HepG2 (cell line): ENCODE measurements at regions of chr4 and their contacts with region 1.

Region 1: DNA sequence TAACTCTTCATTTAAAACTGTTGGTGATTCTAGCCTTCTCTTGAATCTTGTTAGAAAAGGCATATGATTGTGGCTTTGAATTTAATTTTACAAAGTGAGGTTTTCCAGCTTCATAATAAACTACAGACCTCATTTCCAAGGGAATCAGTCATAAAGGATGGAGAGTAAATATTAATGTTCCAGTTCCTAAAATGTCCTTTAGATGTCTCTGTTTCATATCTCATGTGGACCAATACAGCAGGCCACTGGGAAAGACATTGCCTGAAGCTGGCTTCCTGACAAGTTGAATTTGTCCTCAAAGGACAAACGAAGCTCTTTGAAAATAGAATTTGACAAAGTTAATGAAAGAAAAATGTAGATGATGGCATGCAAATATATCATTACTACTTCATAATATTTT is 125.4 kb downstream of the ZNF330 start:
- DNase-seq: peak; percentile 13
- ATAC-seq: peak; percentile 87
- H3K4me3 ChIP-seq: no peak overlapping the region
- H3K27ac ChIP-seq: no peak overlapping the region
- H3K4me1 ChIP-seq: no peaks in the 10 kb centered on the region
- H3K27me3 ChIP-seq: no peaks in the 10 kb centered on the region
- CTCF ChIP-seq: peak; percentile 56
- EP300 ChIP-seq: no peak
- POLR2A ChIP-seq: no peak
- RAD21 ChIP-seq: peak; percentile 52; the same call in 1 of the 2 replicates

Region 2: DNA sequence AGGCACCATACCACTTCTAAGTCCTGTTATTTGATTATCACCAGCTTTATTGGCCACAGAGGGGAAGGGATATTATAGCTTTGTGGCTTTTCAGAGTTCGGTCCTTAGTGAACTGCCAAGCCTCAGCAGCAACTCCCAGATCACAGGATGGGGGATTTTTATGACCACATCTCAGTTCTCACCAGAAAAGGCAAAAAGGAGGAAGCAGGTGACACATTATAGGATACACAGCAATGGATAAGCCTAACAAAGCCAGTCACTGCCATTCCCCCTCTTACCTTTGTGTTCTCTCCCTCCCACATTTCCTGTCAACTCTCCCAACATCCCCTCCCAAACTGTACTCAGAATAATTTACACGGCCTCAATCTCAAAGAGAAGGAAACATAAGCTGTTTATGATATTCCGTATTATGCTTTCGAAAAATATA is 1537.8 kb before region 1 on chr4:
- CTCF ChIA-PET with region 1: no interaction called
- POLR2A ChIA-PET with region 1: no interaction called
- in situ Hi-C with region 1: no loop called
- intact Hi-C with region 1: no loop called
- DNase-seq: no peak
- ATAC-seq: no peak; the same call in 2 of the 3 replicates
- H3K4me3 ChIP-seq: no peak overlapping the region
- H3K27ac ChIP-seq: no peak overlapping the region
- H3K4me1 ChIP-seq: peaks cover 30% of the 10 kb centered on the region
- H3K27me3 ChIP-seq: peaks cover 3 to 7% of the 10 kb centered on the region in 2 experiments; a peak in 2 of 5 replicates
- CTCF ChIP-seq: no peak
- EP300 ChIP-seq: no peak
- POLR2A ChIP-seq: no peak
- RAD21 ChIP-seq: no peak

Region 3: GRCh38 chr4:141311241-141312204 is 34.6 kb before region 1 on chr4:
- CTCF ChIA-PET with region 1: no interaction called
- POLR2A ChIA-PET with region 1: no interaction called
- in situ Hi-C with region 1: no loop called
- intact Hi-C with region 1: no loop called
- DNase-seq: no peak
- ATAC-seq: no peak
- H3K4me3 ChIP-seq: no peak overlapping the region
- H3K27ac ChIP-seq: no peak overlapping the region
- H3K4me1 ChIP-seq: no peaks in the 10 kb centered on the region
- H3K27me3 ChIP-seq: no peaks in the 10 kb centered on the region
- CTCF ChIP-seq: no peak
- EP300 ChIP-seq: no peak
- POLR2A ChIP-seq: no peak
- RAD21 ChIP-seq: no peak

Region 4: DNA sequence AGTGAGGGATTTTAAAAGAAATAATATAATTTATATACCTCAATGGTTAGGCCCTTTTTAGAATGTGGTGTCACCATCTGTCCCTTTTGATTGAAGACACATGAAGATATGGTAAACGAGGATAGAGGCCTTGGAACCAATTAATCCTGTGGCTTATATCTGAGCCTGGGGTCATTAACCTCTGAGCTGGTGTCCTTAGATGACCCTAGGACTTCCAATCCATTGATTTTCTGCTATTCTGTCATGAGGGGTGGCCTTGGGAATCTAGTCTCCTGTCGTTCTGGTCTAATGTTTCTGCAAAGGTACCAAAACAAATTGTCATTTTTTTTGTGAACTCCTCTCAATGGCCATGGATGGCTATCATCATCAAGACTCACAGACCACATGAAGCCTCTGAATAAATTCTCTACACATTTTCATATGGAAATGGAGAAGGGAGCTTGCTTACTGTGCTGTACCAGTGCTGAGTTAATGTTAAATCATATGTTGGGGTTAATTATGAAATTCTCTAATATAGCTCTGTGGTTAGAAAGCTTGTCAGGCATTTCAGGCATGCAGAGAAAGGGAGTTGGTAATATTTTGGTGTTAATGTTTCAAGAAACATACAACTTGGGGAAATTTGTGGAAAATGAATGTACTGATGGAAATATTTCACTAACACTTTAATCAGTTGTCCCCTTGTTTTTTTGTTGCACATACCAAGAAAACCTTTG is 86.0 kb after region 1 on chr4:
- CTCF ChIA-PET with region 1: no interaction called
- POLR2A ChIA-PET with region 1: no interaction called
- in situ Hi-C with region 1: no loop called
- intact Hi-C with region 1: no loop called
- DNase-seq: no peak
- ATAC-seq: no peak
- H3K4me3 ChIP-seq: no peak overlapping the region
- H3K27ac ChIP-seq: no peak overlapping the region
- H3K4me1 ChIP-seq: no peaks in the 10 kb centered on the region
- H3K27me3 ChIP-seq: no peaks in the 10 kb centered on the region; a peak in 1 of 5 replicates
- CTCF ChIP-seq: no peak
- EP300 ChIP-seq: no peak
- POLR2A ChIP-seq: no peak
- RAD21 ChIP-seq: no peak

Region 5: DNA sequence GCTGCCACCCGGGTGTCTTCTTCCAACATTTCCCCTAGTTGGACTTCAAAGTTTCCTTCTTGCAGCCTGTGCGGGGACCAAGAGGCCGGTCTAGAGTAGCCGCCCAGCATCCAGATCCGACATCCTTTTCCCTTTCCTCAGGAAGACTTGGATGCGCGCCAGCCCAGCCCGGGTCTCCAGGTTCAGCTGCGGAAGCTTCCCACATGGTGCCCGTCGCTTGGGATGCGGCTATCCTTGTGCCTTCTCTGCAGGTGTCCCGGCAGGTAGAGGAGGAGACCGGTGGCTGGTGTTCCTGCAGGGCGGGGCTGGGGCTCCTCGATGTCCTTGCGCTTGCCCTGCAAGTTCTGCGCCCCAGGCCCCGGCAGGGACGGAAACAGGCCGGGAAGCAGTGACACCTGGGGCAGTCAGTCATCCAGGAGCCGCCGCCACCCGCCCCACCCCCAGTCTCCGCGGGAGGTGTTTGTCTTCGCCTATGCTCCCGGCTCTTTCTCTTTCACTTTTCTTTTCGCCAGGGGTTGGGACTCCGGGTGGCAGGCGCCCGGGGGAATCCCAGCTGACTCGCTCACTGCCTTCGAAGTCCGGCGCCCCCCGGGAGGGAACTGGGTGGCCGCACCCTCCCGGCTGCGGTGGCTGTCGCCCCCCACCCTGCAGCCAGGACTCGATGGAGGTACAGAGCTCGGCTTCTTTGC is 290.1 kb after region 1 on chr4 and contains the start of gene IL15:
- CTCF ChIA-PET with region 1: no interaction called
- POLR2A ChIA-PET with region 1: no interaction called
- in situ Hi-C with region 1: no loop called
- intact Hi-C with region 1: no loop called
- DNase-seq: peak; percentile 16
- ATAC-seq: peak; percentile 86
- H3K4me3 ChIP-seq: peak within 1 kb of the TSS; percentile 63 to 79 (median 75)
- H3K27ac ChIP-seq: no peak within 1 kb of the TSS
- H3K4me1 ChIP-seq: peaks cover 6% of the 10 kb centered on the region
- H3K27me3 ChIP-seq: peaks cover 0 to 19% of the 10 kb centered on the region in 2 experiments; a peak in 3 of 5 replicates
- CTCF ChIP-seq: no peak
- EP300 ChIP-seq: no peak
- POLR2A ChIP-seq: no peak
- RAD21 ChIP-seq: no peak
- total RNA-seq, gene IL15: 0.18 and 0.24 TPM in 2 replicates

Region 6: DNA sequence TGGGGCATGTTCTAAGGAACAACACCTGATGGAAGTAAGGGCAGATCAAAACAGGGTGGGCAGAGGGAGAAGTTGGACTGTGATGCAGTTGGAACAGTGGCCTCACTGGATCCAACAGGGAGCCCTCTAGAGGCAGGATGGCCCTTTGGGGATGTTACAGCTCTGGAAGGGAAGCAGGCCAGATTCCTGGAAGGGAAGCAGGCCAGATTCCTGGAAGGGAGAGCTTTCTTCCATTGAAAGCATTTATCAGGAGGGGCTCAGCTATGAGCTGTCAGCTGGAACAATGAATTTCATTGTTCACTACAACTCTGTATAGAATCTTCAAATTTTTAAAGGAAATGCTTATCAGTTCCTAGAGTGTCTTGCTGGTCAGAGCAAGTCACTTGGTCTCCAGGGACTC is 308.0 kb after region 1 on chr4:
- CTCF ChIA-PET with region 1: interaction called, 3 read pairs
- POLR2A ChIA-PET with region 1: no interaction called
- in situ Hi-C with region 1: no loop called
- intact Hi-C with region 1: loop called (anchors 1 kb)
- DNase-seq: no peak
- ATAC-seq: peak; percentile 91
- H3K4me3 ChIP-seq: no peak overlapping the region
- H3K27ac ChIP-seq: no peak overlapping the region
- H3K4me1 ChIP-seq: no peaks in the 10 kb centered on the region
- H3K27me3 ChIP-seq: no peaks in the 10 kb centered on the region
- CTCF ChIP-seq: peak; percentile 64
- EP300 ChIP-seq: no peak
- POLR2A ChIP-seq: no peak
- RAD21 ChIP-seq: no peak

Region 7: GRCh38 chr4:141711014-141711610 is 365.0 kb after region 1 on chr4:
- CTCF ChIA-PET with region 1: interaction called, 5 read pairs
- POLR2A ChIA-PET with region 1: no interaction called
- in situ Hi-C with region 1: no loop called
- intact Hi-C with region 1: loop called (anchors 1 kb)
- DNase-seq: no peak
- ATAC-seq: 0 out of 3 replicates have a peak, but pooled peaks have one; percentile 38
- H3K4me3 ChIP-seq: no peak overlapping the region
- H3K27ac ChIP-seq: no peak overlapping the region
- H3K4me1 ChIP-seq: no peaks in the 10 kb centered on the region
- H3K27me3 ChIP-seq: no peaks in the 10 kb centered on the region
- CTCF ChIP-seq: 0 out of 2 replicates have a peak, but pooled peaks have one; percentile 20
- EP300 ChIP-seq: no peak
- POLR2A ChIP-seq: no peak
- RAD21 ChIP-seq: no peak